ENCODE measurements at regions of chr3 and their contacts with region 1.

Region 1: DNA sequence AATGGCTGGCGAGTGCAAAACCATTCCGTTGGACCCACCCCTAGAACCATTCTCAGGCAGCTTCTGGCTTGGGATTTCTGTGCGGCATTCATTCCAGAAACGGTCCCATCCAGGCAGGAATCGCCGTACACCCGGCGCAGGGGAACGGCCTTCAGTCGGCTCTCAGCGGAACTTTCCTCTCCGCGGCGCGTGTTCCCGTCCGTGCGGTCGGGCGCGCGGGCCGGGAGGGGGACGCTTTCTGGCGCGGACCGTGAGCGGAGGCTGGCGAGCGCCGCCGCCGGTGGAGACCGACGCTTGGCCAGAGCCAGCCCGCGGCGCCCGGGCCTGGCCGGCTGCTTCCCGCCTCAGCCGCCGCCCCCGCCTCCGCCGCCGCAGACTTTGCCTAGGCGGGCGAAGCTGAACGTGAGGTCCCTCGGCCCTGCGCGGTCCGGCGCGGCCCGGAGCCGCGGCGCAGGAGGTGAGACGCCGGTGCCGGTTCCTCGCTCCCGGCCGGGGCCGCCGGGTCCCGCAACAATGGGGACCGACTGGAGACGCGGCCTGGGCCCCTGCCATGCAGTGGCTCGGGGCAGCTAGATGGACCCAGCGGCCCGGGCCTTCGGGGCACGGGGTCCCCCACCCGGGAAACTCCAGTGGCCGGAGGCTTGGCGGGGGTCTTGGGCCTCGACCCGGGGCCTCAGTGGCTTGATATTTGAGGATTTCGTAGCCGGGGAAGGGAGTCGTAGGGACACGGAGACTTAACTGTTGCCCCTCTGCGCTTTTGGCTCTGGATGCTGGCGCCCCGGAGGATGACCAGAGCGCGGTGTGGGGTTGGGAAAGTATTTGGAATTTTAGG is at the start of gene RAD54L2:
- ATAC-seq: peak; percentile 87 to 96 (median 94)
- H3K4me3 ChIP-seq: peak within 1 kb of the TSS; percentile 88 to 98 (median 94)
- H3K27ac ChIP-seq: peak within 1 kb of the TSS; percentile 82 to 94
- H3K4me1 ChIP-seq: peaks cover 9 to 15% of the 10 kb centered on the region in 2 donors
- total RNA-seq, gene RAD54L2: 9.9 to 30.4 (median 23.1) TPM

Region 2: DNA sequence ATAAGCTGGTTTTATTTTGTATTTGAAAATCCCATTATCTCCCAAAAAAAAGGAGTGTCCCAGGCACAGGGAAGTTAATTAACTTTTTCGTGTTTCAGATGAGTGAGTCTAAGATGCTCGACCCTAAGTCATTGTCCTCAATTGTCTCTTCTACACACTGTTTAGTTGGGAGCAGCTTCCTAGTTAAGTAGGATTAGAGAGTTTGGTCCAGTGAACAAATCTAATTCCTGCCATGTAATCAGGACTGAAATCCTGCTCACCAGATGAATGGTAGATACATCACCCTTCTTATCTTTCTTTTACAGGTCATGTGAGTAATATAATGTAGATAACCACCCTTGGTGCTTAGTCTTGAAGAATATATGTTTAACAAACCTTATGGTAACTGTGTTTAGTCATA is 382.5 kb before region 1 on chr3:
- in situ Hi-C with region 1: no loop called
- ATAC-seq: no peak
- H3K4me3 ChIP-seq: no peak overlapping the region
- H3K27ac ChIP-seq: no peak overlapping the region
- H3K4me1 ChIP-seq: no peaks in the 10 kb centered on the region

Region 3: GRCh38 chr3:51670823-51671733 is 132.4 kb after region 1 on chr3 and contains the start of gene TEX264:
- in situ Hi-C with region 1: loop called in 1 of 9 experiments (anchors 25 kb)
- ATAC-seq: peak; percentile 77 to 93 (median 87)
- H3K4me3 ChIP-seq: peak within 1 kb of the TSS; percentile 50 to 80 (median 62)
- H3K27ac ChIP-seq: peak within 1 kb of the TSS in 1 of 2 donors; percentile 61
- H3K4me1 ChIP-seq: peaks cover 0 to 7% of the 10 kb centered on the region in 2 donors
- total RNA-seq, gene TEX264: 16.6 to 64.7 (median 33.0) TPM

Measured in motor neuron (in vitro differentiated cells).